ENCODE measurements at regions of chr16 and their contacts with region 1.

Region 1: DNA sequence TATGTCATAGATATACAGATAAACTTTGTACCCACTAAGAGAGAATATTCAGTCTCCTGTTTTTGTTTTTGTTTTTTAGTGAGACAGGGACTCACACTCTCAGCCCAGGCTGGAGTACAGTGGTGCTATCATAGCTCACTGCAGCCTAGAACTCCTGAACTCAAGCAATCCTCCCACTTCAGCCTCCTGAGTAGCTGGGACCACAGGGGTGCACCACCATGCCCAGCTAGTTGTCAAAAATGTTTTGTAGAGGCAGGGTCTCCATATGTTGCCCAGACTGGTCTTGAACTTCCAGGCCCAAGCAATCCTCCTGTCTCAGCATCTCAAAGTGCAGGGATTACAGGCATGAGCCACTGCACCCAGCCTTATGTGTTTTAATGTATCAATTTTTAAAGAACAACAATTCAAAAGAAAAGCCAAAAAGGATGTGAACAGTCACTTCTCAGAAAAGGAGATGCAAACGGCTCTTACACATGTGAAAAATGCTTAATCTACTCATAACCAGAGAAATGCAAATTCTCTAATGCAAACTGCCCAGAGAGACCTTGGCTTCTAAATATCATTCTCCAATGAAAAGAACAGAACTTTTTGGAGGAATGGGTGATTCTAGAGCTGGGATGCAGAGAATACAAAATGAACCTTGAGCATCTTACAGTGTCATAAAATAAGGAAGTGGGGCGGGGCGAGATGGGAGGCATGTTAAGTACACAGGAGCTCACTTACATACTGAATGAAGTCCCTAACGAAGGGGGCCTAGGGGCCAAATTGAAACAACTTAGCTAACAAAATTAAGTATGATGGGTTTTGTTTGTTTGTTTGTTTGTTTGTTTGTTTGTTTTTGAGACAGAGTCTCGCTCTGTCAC is 7.3 kb upstream of the CMTM3 start:
- DNase-seq: no peak
- H3K4me3 ChIP-seq: no peak overlapping the region
- H3K27ac ChIP-seq: no peak overlapping the region
- H3K4me1 ChIP-seq: no peaks in the 10 kb centered on the region
- H3K27me3 ChIP-seq: no peaks in the 10 kb centered on the region
- CTCF ChIP-seq: no peak

Region 2: DNA sequence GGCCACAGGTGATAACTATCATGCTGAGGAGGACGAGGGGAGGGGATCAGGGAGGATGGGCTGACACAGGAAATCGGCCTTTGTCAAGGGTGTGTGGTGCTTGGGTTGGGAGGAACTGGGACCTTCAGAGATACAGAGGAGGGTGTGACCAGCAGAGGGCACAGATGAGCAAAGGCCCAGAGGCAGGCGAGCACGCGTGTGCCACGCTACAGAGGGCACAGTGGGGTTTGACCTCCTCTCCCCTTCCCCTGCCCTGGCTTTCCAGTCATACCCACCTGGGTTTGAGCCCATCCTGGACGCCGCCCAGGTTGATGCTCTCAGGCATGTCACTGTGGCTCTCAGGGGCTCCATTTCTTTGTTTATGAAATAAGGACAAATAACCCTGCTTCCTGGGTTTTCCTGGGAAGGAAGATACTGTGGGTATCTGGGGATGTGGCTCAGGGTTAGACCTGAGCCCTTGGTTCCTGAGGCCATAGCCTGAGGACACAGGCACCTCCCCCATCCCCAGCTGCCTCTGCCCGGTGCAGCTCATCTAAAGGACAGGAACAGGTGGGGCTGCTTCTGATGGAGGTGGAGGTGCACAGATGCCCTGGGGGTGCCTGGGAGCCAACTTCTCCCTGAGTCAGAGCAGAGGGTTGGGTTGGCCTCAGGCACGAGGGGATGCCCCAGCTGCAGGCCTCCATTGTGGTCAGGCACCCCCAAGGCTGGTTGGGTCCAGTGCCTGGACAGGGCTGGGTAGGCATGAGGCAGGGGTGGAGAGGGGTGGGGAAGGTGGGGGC is 118.3 kb before region 1 on chr16:
- CTCF ChIA-PET with region 1: no interaction called
- POLR2A ChIA-PET with region 1: no interaction called
- intact Hi-C with region 1: no loop called
- DNase-seq: peak; percentile 86 to 90
- H3K4me3 ChIP-seq: no peak overlapping the region
- H3K27ac ChIP-seq: peak overlapping the region; percentile 36; the same call in 1 of the 2 replicates
- H3K4me1 ChIP-seq: peaks cover 50% of the 10 kb centered on the region
- H3K27me3 ChIP-seq: no peaks in the 10 kb centered on the region
- CTCF ChIP-seq: peak; percentile 76

Region 3: GRCh38 chr16:66758086-66758485 is 160.9 kb after region 1 on chr16:
- CTCF ChIA-PET with region 1: no interaction called
- POLR2A ChIA-PET with region 1: interaction called, 14 read pairs
- intact Hi-C with region 1: no loop called
- DNase-seq: no peak
- H3K4me3 ChIP-seq: no peak overlapping the region
- H3K27ac ChIP-seq: no peak overlapping the region
- H3K4me1 ChIP-seq: no peaks in the 10 kb centered on the region
- H3K27me3 ChIP-seq: no peaks in the 10 kb centered on the region
- CTCF ChIP-seq: no peak